CD4-positive, alpha-beta T cell (primary cell): ENCODE measurements at regions of chr3 and their contacts with region 1.

Region 1: DNA sequence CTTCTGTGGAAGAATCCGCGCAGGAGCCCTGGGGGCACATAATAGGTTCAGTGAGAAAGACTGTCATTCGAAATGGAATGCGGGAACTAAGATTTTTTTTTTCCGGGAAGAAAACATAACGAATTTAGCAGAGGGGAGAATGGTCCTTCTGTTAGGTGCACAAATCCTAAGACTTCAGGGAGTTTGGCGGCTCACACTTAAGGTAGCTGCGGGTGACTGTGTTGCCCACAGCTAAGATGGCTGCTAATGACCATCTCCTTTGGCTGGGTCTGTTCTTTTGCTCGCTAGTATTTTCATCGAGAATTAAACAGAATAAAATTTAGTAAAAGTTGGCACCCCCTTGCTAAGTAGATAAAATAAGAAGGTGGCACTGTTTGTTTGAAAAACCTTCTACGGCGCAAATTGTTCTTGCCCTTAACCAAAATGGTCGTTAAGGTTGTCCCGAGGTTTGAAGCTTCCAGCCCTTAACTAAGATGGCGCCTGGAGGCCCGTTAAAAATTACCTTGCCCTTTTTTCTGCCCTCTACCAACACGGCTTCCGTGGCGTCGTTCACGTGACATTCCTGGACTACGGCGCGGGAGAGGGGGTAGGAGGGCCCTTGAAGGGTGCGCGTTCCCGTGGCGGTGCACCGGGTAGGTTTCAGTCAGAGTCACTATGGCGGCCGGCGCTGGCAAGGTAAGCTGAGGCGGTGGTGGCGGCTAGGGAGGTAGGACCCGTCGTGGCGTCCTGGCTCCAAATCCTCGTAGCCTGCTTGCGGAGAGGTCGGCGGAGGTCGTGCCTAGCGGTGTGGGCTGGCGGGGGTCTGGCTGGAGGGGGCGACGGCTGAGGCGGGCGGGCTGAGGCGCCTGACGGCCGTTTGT is at the start of gene SLMAP:
- DNase-seq: peak; percentile 91 to 98 (median 94)
- ATAC-seq: peak; percentile 92
- H3K4me3 ChIP-seq: peak within 1 kb of the TSS; percentile 72
- H3K4me3 Mint-ChIP-seq: peak within 1 kb of the TSS; percentile 97
- H3K27ac ChIP-seq: peak within 1 kb of the TSS; percentile 82 to 87
- H3K27ac Mint-ChIP-seq: peak within 1 kb of the TSS; percentile 97
- H3K4me1 ChIP-seq: peaks cover 33% of the 10 kb centered on the region
- H3K4me1 Mint-ChIP-seq: peaks cover 46% of the 10 kb centered on the region
- H3K27me3 ChIP-seq: no peaks in the 10 kb centered on the region
- H3K27me3 Mint-ChIP-seq: no peaks in the 10 kb centered on the region
- CTCF ChIP-seq: no peak
- total RNA-seq, gene SLMAP: 51.3 to 52.2 TPM

Region 2: GRCh38 chr3:57227204-57227929 is 528.5 kb before region 1 on chr3 and contains the start of gene APPL1:
- CTCF ChIA-PET with region 1: no interaction called
- POLR2A ChIA-PET with region 1: no interaction called
- intact Hi-C with region 1: loop called in 1 of 2 experiments (anchors 5 kb)
- DNase-seq: peak; percentile 61 to 93 (median 84)
- ATAC-seq: peak; percentile 88
- H3K4me3 ChIP-seq: peak within 1 kb of the TSS; percentile 80
- H3K4me3 Mint-ChIP-seq: peak within 1 kb of the TSS; percentile 95
- H3K27ac ChIP-seq: no peak within 1 kb of the TSS
- H3K27ac Mint-ChIP-seq: peak within 1 kb of the TSS; percentile 82
- H3K4me1 ChIP-seq: peaks cover 10% of the 10 kb centered on the region
- H3K4me1 Mint-ChIP-seq: peaks cover 33% of the 10 kb centered on the region
- H3K27me3 ChIP-seq: no peaks in the 10 kb centered on the region
- H3K27me3 Mint-ChIP-seq: no peaks in the 10 kb centered on the region
- CTCF ChIP-seq: no peak
- total RNA-seq, gene APPL1: 21.3 to 22.9 TPM

Region 3: GRCh38 chr3:57597122-57597923 is 158.6 kb before region 1 on chr3 and contains the start of gene ARF4:
- CTCF ChIA-PET with region 1: interaction called, 4 read pairs
- POLR2A ChIA-PET with region 1: interaction called, 52 read pairs
- intact Hi-C with region 1: loop called (anchors 1 kb)
- DNase-seq: peak; percentile 97 to 100 (median 99)
- ATAC-seq: peak; percentile 87
- H3K4me3 ChIP-seq: peak within 1 kb of the TSS; percentile 92
- H3K4me3 Mint-ChIP-seq: peak within 1 kb of the TSS; percentile 85
- H3K27ac ChIP-seq: peak within 1 kb of the TSS; percentile 98 to 99
- H3K27ac Mint-ChIP-seq: peak within 1 kb of the TSS; percentile 97
- H3K4me1 ChIP-seq: peaks cover 33% of the 10 kb centered on the region
- H3K4me1 Mint-ChIP-seq: peaks cover 58% of the 10 kb centered on the region
- H3K27me3 ChIP-seq: no peaks in the 10 kb centered on the region
- H3K27me3 Mint-ChIP-seq: no peaks in the 10 kb centered on the region
- CTCF ChIP-seq: peak; percentile 48
- total RNA-seq, gene ARF4: 56.7 to 59.9 TPM

Region 4: DNA sequence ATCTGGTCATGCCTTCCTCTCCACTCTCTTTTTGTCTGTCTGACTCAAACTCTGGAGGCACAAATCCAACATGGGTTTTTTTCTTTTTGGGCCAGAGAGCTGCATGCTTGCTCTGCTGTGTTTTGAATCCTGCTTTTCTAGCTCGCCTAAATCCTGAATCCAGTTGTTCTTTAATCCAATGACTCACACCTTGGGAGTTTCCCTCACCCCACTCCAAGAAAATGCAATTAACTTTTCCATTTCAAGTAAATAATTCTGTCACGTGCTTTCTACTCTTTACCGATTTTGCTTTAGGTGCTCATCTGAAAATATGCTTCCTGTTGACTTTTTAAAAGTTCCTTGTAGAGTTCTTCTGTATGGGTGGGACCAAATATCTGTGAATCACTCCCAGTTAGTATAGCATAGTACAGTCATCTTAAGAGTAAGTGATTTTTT is 47.8 kb after region 1 on chr3:
- CTCF ChIA-PET with region 1: no interaction called
- POLR2A ChIA-PET with region 1: interaction called, 8 read pairs
- intact Hi-C with region 1: loop called (anchors 5 kb)
- DNase-seq: peak in 4 of 14 experiments; percentile 13 to 55 (median 19)
- ATAC-seq: peak; percentile 86
- H3K4me3 ChIP-seq: peak overlapping the region; percentile 13
- H3K4me3 Mint-ChIP-seq: peak overlapping the region; percentile 68
- H3K27ac ChIP-seq: peak overlapping the region in 1 of 2 donors; percentile 21
- H3K27ac Mint-ChIP-seq: peak overlapping the region; percentile 84
- H3K4me1 ChIP-seq: peaks cover 6% of the 10 kb centered on the region
- H3K4me1 Mint-ChIP-seq: peaks cover 76% of the 10 kb centered on the region
- H3K27me3 ChIP-seq: no peaks in the 10 kb centered on the region
- H3K27me3 Mint-ChIP-seq: no peaks in the 10 kb centered on the region
- CTCF ChIP-seq: no peak

Region 5: DNA sequence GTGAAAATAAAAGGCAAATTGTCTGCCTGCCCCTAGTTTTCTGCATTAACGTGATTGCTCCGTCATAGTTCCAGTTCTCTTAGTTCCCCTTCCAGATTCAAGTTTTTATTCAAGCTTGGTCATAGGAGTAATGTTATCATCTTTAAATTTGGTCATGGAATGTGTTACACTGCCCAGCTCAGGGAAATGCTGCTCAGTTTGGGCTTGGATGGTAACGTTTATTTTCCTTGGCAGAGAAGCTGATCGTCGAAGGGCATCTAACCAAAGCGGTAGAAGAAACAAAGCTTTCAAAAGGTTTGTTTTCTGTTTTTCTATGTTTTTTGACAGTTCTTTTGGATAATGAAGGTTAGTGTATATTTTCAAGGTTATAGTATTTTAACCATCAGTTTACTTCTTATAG is 133.9 kb after region 1 on chr3:
- CTCF ChIA-PET with region 1: no interaction called
- POLR2A ChIA-PET with region 1: no interaction called
- intact Hi-C with region 1: no loop called
- DNase-seq: no peak
- ATAC-seq: no peak
- H3K4me3 ChIP-seq: no peak overlapping the region
- H3K4me3 Mint-ChIP-seq: no peak overlapping the region
- H3K27ac ChIP-seq: no peak overlapping the region
- H3K27ac Mint-ChIP-seq: no peak overlapping the region
- H3K4me1 ChIP-seq: no peaks in the 10 kb centered on the region
- H3K4me1 Mint-ChIP-seq: no peaks in the 10 kb centered on the region
- H3K27me3 ChIP-seq: no peaks in the 10 kb centered on the region
- H3K27me3 Mint-ChIP-seq: no peaks in the 10 kb centered on the region
- CTCF ChIP-seq: no peak

Region 6: DNA sequence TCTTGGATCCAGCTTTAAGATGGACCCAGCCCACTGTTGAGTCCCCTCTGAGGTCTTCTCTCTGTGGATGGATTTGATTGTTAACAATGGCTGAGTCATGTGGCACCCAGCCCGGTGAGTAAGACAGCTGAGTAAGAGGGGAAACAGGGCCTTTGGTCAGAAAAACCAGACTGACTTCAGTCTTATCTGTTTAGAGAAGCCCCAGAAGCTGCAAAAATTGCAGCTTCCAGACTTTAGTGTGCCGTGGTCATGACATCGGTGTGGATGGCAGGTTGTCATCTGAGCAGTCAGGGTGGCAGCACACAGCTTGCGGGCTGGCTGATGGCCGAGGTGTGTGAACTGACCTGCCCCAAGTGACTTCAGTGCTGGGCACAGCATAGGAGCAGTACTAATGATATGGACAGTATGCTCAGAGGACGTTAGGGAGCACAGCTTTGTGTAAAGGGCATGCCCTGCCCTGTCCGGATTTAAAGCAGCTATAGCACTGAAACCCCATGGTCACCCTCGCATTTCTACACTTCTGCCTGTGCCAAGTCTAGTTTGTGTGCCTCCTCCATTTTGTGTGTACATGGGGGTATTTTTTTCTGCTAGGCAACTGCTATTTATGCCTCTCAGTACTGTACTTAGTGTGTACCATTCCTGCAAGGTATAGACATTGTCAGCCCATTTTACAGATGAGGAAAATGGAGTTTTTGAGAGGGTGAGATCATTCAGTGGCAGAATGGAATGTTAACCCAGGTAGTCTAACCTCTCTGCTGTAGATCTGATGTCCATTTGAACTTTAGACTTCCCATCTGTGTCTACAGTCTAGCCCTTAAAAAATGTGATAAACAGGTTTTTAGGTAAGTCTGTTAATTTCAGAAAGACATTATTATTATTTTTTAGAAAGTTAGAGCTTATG is 296.7 kb after region 1 on chr3:
- CTCF ChIA-PET with region 1: no interaction called
- POLR2A ChIA-PET with region 1: no interaction called
- intact Hi-C with region 1: no loop called
- DNase-seq: peak in 3 of 14 experiments; percentile 11 to 50 (median 33)
- ATAC-seq: no peak
- H3K4me3 ChIP-seq: no peak overlapping the region
- H3K4me3 Mint-ChIP-seq: no peak overlapping the region
- H3K27ac ChIP-seq: no peak overlapping the region
- H3K27ac Mint-ChIP-seq: no peak overlapping the region
- H3K4me1 ChIP-seq: peaks cover 10% of the 10 kb centered on the region
- H3K4me1 Mint-ChIP-seq: peaks cover 29% of the 10 kb centered on the region
- H3K27me3 ChIP-seq: no peaks in the 10 kb centered on the region
- H3K27me3 Mint-ChIP-seq: no peaks in the 10 kb centered on the region
- CTCF ChIP-seq: no peak

Region 7: GRCh38 chr3:58237238-58237940 is 481.5 kb after region 1 on chr3 and contains the start of gene ABHD6:
- CTCF ChIA-PET with region 1: no interaction called
- POLR2A ChIA-PET with region 1: no interaction called
- intact Hi-C with region 1: loop called in 1 of 2 experiments (anchors 10 kb)
- DNase-seq: peak; percentile 64 to 89 (median 79)
- ATAC-seq: peak; percentile 88
- H3K4me3 ChIP-seq: peak within 1 kb of the TSS; percentile 95
- H3K4me3 Mint-ChIP-seq: peak within 1 kb of the TSS; percentile 96
- H3K27ac ChIP-seq: peak within 1 kb of the TSS; percentile 24 to 57
- H3K27ac Mint-ChIP-seq: peak within 1 kb of the TSS; percentile 61
- H3K4me1 ChIP-seq: peaks cover 19% of the 10 kb centered on the region
- H3K4me1 Mint-ChIP-seq: peaks cover 14% of the 10 kb centered on the region
- H3K27me3 ChIP-seq: peaks cover 0 to 3% of the 10 kb centered on the region in 2 experiments
- H3K27me3 Mint-ChIP-seq: peaks cover 18% of the 10 kb centered on the region
- CTCF ChIP-seq: peak; percentile 16
- total RNA-seq, gene ABHD6: 0.71 to 1.9 TPM